ENCODE measurements at regions of chr17 and their contacts with region 1.

Region 1: GRCh38 chr17:58517734-58518609 is 3.5 kb upstream of the MTMR4 start:
- DNase-seq: peak; percentile 100
- ATAC-seq: peak; percentile 84
- H3K4me3 ChIP-seq: peak overlapping the region; percentile 64
- H3K27ac ChIP-seq: peak overlapping the region; percentile 80
- H3K4me1 ChIP-seq: peaks cover 12% of the 10 kb centered on the region; the same call in 1 of the 2 replicates
- H3K27me3 ChIP-seq: no peaks in the 10 kb centered on the region
- CTCF ChIP-seq: no peak
- POLR2A ChIP-seq: 0 out of 2 replicates have a peak, but pooled peaks have one; percentile 42
- RAD21 ChIP-seq: no peak

Region 2: GRCh38 chr17:58587702-58588254 is 69.8 kb after region 1 on chr17:
- CTCF ChIA-PET with region 1: interaction called, 3 read pairs
- POLR2A ChIA-PET with region 1: no interaction called
- dilution Hi-C with region 1: no loop called
- in situ Hi-C with region 1: no loop called
- intact Hi-C with region 1: loop called (anchors 2 kb)
- DNase-seq: peak; percentile 27
- ATAC-seq: peak; percentile 87
- H3K4me3 ChIP-seq: no peak overlapping the region
- H3K27ac ChIP-seq: no peak overlapping the region
- H3K4me1 ChIP-seq: no peaks in the 10 kb centered on the region
- H3K27me3 ChIP-seq: peaks cover 17% of the 10 kb centered on the region
- CTCF ChIP-seq: peak; percentile 78
- POLR2A ChIP-seq: no peak
- RAD21 ChIP-seq: peak; percentile 80

Region 3: DNA sequence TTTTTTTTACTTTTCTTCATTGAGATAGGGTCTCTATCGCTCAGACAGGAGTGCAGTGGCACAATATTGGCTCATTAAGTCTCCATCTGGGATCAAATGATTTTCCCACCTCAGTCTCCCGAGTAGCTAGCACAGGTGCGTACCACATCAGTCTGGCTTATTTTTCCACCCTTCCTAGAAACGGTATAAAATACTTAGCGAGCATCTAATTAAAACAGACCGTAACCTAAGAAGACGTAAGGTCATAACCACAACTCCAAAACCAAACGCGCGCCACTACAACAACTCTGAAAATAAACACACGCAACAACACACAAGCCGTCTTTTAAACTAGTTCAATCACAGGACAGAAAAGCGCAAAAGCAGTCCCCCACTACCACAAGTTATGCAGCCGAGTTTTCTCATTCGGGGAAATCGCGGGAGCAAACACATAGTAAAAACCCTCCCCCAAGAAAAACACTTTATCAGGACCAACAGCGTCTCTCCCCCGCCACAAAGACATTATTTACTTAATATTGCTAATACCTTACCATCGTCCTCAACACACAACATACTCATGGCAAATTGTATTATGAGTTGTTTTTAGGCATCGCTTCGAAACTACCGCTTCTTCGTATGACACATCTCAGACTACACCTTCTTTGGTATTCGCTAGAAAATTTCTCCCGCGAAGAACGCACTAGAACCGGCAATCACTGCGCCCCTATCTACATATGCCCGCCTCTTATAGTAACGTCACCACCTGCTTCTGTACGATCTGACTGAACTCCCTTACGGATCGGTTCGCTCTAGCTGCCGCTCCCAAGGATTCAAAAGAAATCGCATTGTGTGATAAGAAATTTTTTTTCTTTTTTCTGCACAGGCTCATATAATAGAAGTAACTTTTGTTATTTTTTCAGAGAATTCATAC is 141.1 kb after region 1 on chr17:
- CTCF ChIA-PET with region 1: no interaction called
- POLR2A ChIA-PET with region 1: no interaction called
- dilution Hi-C with region 1: no loop called
- in situ Hi-C with region 1: no loop called
- intact Hi-C with region 1: loop called (anchors 1 kb)
- DNase-seq: peak; percentile 99
- ATAC-seq: peak; percentile 94
- H3K4me3 ChIP-seq: peak overlapping the region; percentile 22
- H3K27ac ChIP-seq: peak overlapping the region; percentile 82
- H3K4me1 ChIP-seq: no peaks in the 10 kb centered on the region
- H3K27me3 ChIP-seq: no peaks in the 10 kb centered on the region
- CTCF ChIP-seq: no peak
- POLR2A ChIP-seq: peak; percentile 100
- RAD21 ChIP-seq: no peak

Region 4: GRCh38 chr17:58710936-58711775 is 193.2 kb after region 1 on chr17:
- CTCF ChIA-PET with region 1: no interaction called
- POLR2A ChIA-PET with region 1: no interaction called
- dilution Hi-C with region 1: no loop called
- in situ Hi-C with region 1: no loop called
- intact Hi-C with region 1: loop called (anchors 2 kb)
- DNase-seq: peak; percentile 69
- ATAC-seq: peak; percentile 65; the same call in 1 of the 2 replicates
- H3K4me3 ChIP-seq: no peak overlapping the region
- H3K27ac ChIP-seq: no peak overlapping the region
- H3K4me1 ChIP-seq: no peaks in the 10 kb centered on the region
- H3K27me3 ChIP-seq: no peaks in the 10 kb centered on the region
- CTCF ChIP-seq: peak; percentile 79
- POLR2A ChIP-seq: no peak
- RAD21 ChIP-seq: peak; percentile 75

Region 5: GRCh38 chr17:58997756-58998550 is 480.0 kb after region 1 on chr17:
- CTCF ChIA-PET with region 1: no interaction called
- POLR2A ChIA-PET with region 1: no interaction called
- dilution Hi-C with region 1: no loop called
- in situ Hi-C with region 1: loop called (anchors 5 kb)
- intact Hi-C with region 1: no loop called
- DNase-seq: peak; percentile 40
- ATAC-seq: peak; percentile 50
- H3K4me3 ChIP-seq: no peak overlapping the region
- H3K27ac ChIP-seq: no peak overlapping the region
- H3K4me1 ChIP-seq: peaks cover 12% of the 10 kb centered on the region
- H3K27me3 ChIP-seq: no peaks in the 10 kb centered on the region
- CTCF ChIP-seq: no peak
- POLR2A ChIP-seq: no peak
- RAD21 ChIP-seq: no peak